Activated CD4-positive, alpha-beta memory T cell treated with anti-CD3 and anti-CD28 coated beads, Interleukin-2, amount 10 ng/mL, durations not matched to agents 7 days and 5 days (primary cell): ENCODE measurements at regions of chr10 and their contacts with region 1.

Region 1: DNA sequence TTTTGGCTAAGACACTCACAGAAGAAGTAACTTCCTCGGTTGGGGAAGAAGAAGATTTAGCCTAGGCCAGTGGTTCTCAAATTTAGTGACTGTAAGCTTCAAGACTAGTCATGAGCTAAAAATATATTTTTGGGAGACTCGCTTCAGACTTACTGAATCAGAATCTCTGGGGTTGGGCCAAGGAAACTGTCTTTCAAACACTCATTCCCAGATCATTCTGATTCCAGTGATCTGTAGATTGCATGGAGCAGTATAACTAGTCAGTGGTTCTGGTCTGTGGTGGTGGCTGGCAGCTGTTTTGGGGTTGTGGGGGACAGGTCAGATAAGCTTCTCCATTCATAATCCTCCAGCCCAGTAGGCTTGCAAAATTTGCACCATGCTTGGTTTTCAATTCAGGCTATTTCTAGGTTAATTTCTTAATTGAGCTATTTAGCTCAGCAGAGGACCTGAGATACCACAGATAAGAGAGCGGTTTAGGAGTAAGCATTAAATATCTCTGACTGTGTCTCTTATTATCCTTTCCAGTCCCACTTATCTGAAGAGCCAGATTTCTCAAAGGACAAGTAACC is 3.8 kb upstream of the KAT6B start:
- DNase-seq: no peak
- H3K4me3 Mint-ChIP-seq: no peak overlapping the region
- H3K27ac Mint-ChIP-seq: no peak overlapping the region
- H3K4me1 Mint-ChIP-seq: peaks cover 39% of the 10 kb centered on the region
- H3K27me3 Mint-ChIP-seq: no peaks in the 10 kb centered on the region

Region 2: DNA sequence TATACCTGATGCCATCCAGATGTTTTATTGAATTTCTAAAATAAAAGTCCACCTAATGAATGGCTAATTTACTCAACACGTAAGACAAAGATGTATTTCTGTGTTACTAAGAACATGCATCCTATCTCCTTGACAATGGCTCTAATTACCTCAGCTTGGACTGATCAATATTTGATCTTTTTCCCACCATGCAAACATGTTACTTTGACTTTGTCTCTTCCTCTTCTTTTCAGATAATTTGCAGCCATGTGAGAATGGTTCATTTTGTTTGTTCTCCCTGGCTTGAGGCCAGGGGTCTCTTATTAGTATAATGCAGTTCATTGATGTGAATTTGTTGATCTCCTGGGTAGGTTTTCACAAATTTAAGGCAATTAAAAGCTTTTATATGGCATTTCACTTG is 369.4 kb before region 1 on chr10:
- CTCF ChIA-PET with region 1: no interaction called
- POLR2A ChIA-PET with region 1: no interaction called
- DNase-seq: no peak
- H3K4me3 Mint-ChIP-seq: no peak overlapping the region
- H3K27ac Mint-ChIP-seq: no peak overlapping the region
- H3K4me1 Mint-ChIP-seq: peaks cover 3% of the 10 kb centered on the region
- H3K27me3 Mint-ChIP-seq: no peaks in the 10 kb centered on the region

Region 3: GRCh38 chr10:74766501-74766900 is 56.1 kb before region 1 on chr10:
- CTCF ChIA-PET with region 1: no interaction called
- POLR2A ChIA-PET with region 1: no interaction called
- DNase-seq: no peak
- H3K4me3 Mint-ChIP-seq: no peak overlapping the region
- H3K27ac Mint-ChIP-seq: no peak overlapping the region
- H3K4me1 Mint-ChIP-seq: peaks cover 3% of the 10 kb centered on the region
- H3K27me3 Mint-ChIP-seq: peaks cover 2% of the 10 kb centered on the region

Region 4: GRCh38 chr10:74898201-74898976 is 75.8 kb after region 1 on chr10:
- CTCF ChIA-PET with region 1: no interaction called
- POLR2A ChIA-PET with region 1: interaction called, 10 read pairs
- DNase-seq: peak; percentile 58
- H3K4me3 Mint-ChIP-seq: peak overlapping the region; percentile 1
- H3K27ac Mint-ChIP-seq: peak overlapping the region; percentile 72
- H3K4me1 Mint-ChIP-seq: peaks cover 44% of the 10 kb centered on the region
- H3K27me3 Mint-ChIP-seq: no peaks in the 10 kb centered on the region